Ascending aorta (tissue), 2 donors: ENCODE measurements at regions of chr17 and their contacts with region 1.

Region 1: DNA sequence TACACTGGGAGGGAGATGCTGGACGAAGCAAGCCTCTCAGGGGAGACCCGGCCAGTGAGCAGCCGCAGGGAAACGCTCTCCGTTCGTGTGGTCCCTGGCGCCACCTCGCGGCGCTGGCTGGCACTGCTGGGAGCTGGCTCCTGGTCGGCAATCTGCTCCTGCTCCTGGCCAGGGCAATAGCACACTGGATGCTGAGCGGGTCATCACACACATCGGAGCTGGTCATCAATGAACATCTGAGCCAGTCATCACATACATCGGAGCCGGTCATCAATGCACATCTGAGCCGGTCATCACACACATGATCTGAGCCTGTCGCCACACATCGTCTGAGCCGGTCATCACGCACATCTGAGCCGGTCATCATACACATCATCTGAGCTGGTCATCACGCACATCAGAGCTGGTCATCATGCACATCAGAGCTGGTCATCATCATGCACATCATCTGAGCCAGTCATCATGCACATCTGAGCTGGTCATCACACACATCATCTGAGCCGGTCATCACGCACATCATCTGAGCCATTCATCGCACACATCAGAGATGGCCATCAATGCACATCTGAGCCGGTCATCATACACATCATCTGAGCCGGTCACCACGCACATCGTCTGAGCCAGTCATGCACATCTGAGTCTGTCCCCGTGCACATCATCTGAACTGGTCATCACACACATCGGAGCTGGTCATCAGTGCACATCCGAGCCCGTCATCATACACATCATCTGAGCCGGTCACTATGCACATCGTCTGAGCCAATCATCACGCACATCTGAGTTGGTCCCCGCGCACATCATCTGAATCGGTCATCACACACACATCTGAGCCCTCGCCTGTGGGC is 217.3 kb downstream of the RBFOX3 start:
- DNase-seq: peak in 1 of 2 donors; percentile 85
- H3K4me3 ChIP-seq: no peak overlapping the region
- H3K27ac ChIP-seq: no peak overlapping the region
- H3K4me1 ChIP-seq: no peaks in the 10 kb centered on the region
- H3K27me3 ChIP-seq: peaks cover 7% of the 10 kb centered on the region
- CTCF ChIP-seq: peak; percentile 90 to 93 (median 91)

Region 2: GRCh38 chr17:78993241-78993956 is 400.2 kb before region 1 on chr17:
- intact Hi-C with region 1: loop called (anchors 5 kb)
- DNase-seq: peak in 1 of 2 donors; percentile 73
- H3K4me3 ChIP-seq: no peak overlapping the region
- H3K27ac ChIP-seq: no peak overlapping the region
- H3K4me1 ChIP-seq: peaks cover 0 to 14% of the 10 kb centered on the region in 2 donors
- H3K27me3 ChIP-seq: no peaks in the 10 kb centered on the region
- CTCF ChIP-seq: peak; percentile 57 to 82 (median 72)

Region 3: DNA sequence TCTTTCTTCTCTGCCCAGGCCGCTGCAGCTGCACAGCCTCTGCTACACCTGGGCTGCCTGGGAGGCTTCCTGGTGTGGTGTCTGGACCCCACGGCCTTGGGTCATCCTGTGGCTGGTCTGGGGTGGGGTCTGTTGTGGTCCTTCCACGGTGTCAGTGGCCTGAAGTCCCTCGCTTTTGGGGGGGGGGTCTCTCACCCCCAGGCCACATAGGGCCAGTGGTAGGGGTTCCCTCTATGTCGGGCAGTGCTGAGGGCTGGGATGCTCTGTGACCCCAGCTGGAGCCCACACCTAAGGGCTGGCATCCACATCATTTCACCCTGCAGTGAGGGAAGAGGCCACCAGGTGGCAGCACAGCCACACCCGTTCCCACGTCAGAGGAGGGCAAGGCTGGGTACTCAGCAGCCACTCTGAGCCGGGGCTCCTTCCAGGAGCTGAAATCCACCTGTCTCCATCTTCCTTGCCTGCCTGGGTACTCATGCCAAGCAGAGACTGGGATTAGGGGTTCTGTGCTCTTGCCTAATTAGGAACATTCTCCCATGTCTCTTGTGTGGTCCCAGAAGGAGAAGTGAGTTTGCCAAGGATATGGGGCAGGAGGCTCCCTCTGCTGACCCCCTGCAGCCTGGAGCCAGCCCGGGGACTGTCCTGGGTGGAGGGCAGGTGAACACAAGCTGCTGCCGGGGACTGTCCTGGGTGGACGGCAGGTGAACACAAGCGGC is 306.0 kb before region 1 on chr17:
- intact Hi-C with region 1: loop called (anchors 1 kb)
- DNase-seq: peak in 1 of 2 donors; percentile 83
- H3K4me3 ChIP-seq: no peak overlapping the region
- H3K27ac ChIP-seq: no peak overlapping the region
- H3K4me1 ChIP-seq: peaks cover 0 to 5% of the 10 kb centered on the region in 2 donors
- H3K27me3 ChIP-seq: no peaks in the 10 kb centered on the region
- CTCF ChIP-seq: peak; percentile 79 to 95 (median 86)

Region 4: DNA sequence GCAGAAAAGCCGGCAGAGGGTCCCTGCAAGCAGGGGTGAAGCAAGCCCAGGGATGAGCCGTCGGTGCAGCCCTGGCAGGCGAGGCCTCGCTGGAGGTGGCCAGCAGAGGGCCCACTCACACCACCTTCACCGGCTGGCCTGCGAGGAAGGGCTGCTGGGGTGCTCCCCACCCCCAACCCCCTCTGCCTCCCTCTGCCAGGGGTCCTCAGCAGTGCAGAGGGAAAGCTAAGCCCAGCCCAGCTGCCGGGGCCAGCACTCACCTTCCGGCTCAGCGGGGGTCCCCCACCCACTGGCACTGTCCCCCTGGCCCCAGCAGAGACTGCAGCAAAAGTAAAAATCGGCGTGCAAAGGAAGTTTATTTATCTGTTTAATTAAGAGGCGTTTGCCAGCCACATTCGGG is 205.5 kb before region 1 on chr17:
- intact Hi-C with region 1: loop called (anchors 5 kb)
- DNase-seq: no peak
- H3K4me3 ChIP-seq: no peak overlapping the region
- H3K27ac ChIP-seq: no peak overlapping the region
- H3K4me1 ChIP-seq: no peaks in the 10 kb centered on the region
- H3K27me3 ChIP-seq: peaks cover 9% of the 10 kb centered on the region
- CTCF ChIP-seq: peak; percentile 10 to 47 (median 18)

Region 5: DNA sequence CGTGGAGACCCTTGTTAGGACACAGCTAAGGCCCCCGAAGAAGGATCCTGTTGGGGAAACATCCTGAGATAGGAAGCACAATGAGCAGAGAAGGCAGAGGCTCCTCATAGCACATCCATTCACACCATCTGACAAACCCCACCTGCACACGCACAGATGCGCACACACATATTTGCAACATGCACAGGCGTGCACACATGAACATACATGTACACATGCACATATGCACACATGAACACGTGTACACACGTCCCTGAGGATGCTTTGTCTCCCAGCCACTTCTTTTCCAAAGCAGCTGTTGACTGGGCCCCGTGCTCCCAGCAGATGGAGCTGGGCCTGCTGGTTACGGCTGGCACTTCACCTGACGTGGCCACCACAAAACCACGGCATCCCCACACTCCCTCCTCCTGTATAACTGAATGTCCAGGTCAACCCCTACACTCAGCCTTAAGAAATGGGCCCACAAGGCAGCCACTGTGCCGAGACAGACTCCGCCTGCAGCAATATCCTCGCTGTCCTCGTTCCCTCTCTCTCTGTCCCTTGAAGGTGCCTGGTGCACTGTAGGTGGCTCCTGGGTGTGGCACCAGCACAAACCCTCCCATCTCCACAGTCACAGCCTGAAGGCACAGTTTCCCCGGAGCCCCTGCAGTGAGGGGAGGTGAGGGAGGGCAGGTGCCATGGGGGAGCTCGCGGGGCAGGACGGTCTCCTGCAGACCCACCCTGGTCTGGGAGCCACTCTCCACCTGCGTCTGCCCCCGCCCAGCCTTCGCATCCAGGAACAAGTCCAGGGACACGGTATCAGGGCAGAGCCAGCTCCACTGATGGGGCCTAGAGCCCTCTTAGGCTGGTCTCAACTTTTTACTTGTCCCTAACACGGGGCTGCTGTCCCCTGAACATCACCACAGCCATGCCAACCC is 34.3 kb after region 1 on chr17:
- intact Hi-C with region 1: no loop called
- DNase-seq: no peak
- H3K4me3 ChIP-seq: no peak overlapping the region
- H3K27ac ChIP-seq: no peak overlapping the region
- H3K4me1 ChIP-seq: no peaks in the 10 kb centered on the region
- H3K27me3 ChIP-seq: no peaks in the 10 kb centered on the region
- CTCF ChIP-seq: no peak